T-cell (primary cell): ENCODE measurements at regions of chr21 and their contacts with region 1.

Region 1: GRCh38 chr21:41250194-41250918 is 66.2 kb upstream of the FAM3B start:
- DNase-seq: no peak
- ATAC-seq: no peak
- H3K4me3 ChIP-seq: no peak overlapping the region
- H3K4me3 Mint-ChIP-seq: no peak overlapping the region
- H3K27ac ChIP-seq: no peak overlapping the region
- H3K27ac Mint-ChIP-seq: no peak overlapping the region
- H3K4me1 ChIP-seq: no peaks in the 10 kb centered on the region
- H3K4me1 Mint-ChIP-seq: no peaks in the 10 kb centered on the region
- H3K27me3 ChIP-seq: peaks cover 0 to 40% of the 10 kb centered on the region in 2 experiments
- H3K27me3 Mint-ChIP-seq: peaks cover 31 to 41% of the 10 kb centered on the region in 2 donors

Region 2: DNA sequence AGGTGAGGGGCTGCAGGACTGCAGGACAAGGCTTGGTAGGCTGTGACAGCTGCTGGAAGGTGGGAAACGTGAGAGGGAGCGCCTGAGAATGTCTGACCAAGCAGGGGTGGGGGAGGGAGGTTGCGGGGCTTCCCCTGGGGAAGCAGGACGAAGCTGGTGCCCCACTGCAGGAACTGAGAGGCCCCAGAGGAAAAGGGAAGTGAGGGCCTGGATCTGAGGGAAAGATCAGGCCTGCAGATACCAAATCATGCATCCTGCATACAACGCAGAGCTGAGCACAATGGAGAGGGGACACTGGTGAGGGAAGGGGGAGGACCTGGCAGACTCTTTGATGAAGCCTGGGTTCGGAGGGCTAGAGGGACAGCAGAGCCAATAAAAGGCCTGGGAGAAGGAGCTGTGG is 148.1 kb before region 1 on chr21:
- CTCF ChIA-PET with region 1: no interaction called
- POLR2A ChIA-PET with region 1: no interaction called
- DNase-seq: no peak
- ATAC-seq: no peak
- H3K4me3 ChIP-seq: no peak overlapping the region
- H3K4me3 Mint-ChIP-seq: no peak overlapping the region
- H3K27ac ChIP-seq: no peak overlapping the region
- H3K27ac Mint-ChIP-seq: no peak overlapping the region
- H3K4me1 ChIP-seq: no peaks in the 10 kb centered on the region
- H3K4me1 Mint-ChIP-seq: no peaks in the 10 kb centered on the region
- H3K27me3 ChIP-seq: peaks cover 0 to 6% of the 10 kb centered on the region in 2 experiments
- H3K27me3 Mint-ChIP-seq: peaks cover 27 to 29% of the 10 kb centered on the region in 2 donors

Region 3: GRCh38 chr21:41338455-41338854 is 88.1 kb after region 1 on chr21:
- CTCF ChIA-PET with region 1: no interaction called
- POLR2A ChIA-PET with region 1: interaction called in 1 of 2 experiments, 12 read pairs
- DNase-seq: no peak
- ATAC-seq: no peak
- H3K4me3 ChIP-seq: no peak overlapping the region
- H3K4me3 Mint-ChIP-seq: no peak overlapping the region
- H3K27ac ChIP-seq: no peak overlapping the region
- H3K27ac Mint-ChIP-seq: no peak overlapping the region
- H3K4me1 ChIP-seq: no peaks in the 10 kb centered on the region
- H3K4me1 Mint-ChIP-seq: no peaks in the 10 kb centered on the region
- H3K27me3 ChIP-seq: peaks cover 0 to 3% of the 10 kb centered on the region in 2 experiments
- H3K27me3 Mint-ChIP-seq: peaks cover 3 to 6% of the 10 kb centered on the region in 2 donors